ENCODE measurements at regions of chr2 and their contacts with region 1.

Region 1: DNA sequence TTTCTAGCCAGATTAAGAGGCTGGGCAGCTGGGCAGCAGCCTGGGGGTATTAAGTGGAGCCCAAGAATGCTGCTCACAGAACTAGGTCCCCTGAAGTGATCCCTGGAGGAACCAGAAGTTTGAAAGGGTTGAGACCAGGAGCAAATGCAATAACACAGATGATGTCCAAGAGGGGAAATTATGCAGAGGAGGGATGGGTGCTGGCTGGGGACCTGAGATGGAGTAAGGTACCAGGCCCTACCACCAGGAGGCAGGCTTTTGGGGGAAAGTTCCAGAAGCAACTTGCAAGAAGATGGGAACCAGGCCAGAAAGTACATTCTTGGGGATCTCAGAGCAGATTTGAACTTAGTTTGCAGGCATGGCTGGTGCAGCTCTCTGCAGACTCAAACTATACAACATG is 175.1 kb downstream of the NCK2 start:
- DNase-seq: peak; percentile 62
- ATAC-seq: peak; percentile 64
- H3K4me3 ChIP-seq: peak overlapping the region in 1 of 2 experiments; percentile 32; a peak in 1 of 4 replicates
- H3K27ac ChIP-seq: peak overlapping the region; percentile 76
- H3K4me1 ChIP-seq: peaks cover 21 to 39% of the 10 kb centered on the region in 2 experiments
- H3K27me3 ChIP-seq: no peaks in the 10 kb centered on the region
- CTCF ChIP-seq: peak; percentile 44 to 87 (median 85); a peak in 5 of 6 replicates
- POLR2A ChIP-seq: no peak
- RAD21 ChIP-seq: peak; percentile 46

Region 2: DNA sequence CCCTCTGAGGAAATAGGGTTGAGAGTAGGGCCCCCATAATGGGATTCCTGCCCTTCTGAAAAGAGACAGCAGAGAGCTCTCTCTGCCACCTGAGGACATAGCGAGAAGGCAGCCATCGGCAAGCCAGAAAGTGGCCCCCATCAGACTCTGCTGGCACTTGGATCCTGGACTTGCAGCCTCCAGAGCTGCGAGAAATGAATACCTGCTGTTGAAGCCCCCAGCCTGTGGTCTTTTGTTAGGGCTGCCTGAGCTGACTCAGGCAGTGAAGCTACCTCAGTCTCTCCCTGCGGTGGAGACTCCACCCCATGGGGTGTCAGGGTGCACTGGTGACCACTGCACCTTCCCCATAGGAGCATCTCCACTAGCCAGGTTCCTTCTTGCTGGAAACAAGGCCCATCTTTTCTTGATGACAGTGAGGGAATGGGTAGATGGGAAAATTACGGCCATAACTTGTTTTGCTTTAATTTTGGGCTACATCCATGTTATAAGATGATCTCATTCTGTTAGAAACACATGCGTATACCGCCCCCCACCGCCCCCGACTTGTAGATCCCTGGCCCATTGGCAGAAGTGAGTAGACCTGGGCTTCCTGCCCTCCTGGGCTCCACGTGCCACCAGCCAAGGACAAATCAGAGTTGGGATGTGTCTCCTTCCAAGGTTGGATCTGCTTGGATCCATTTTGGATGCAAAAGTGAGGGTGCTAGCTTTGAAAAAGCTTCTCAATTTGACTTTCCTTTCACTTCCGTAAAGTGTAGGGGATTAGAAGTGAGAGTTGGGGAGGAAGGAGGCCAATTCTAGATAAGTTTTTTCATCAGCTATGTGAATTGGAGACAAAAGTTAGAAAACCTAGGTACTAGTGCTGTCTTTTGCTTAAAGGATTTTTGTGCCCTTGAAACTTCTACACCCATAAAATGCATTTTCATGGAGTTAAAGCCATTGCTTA is 132.2 kb before region 1 on chr2:
- CTCF ChIA-PET with region 1: no interaction called
- POLR2A ChIA-PET with region 1: no interaction called
- RAD21 ChIA-PET with region 1: no interaction called
- intact Hi-C with region 1: no loop called
- DNase-seq: no peak
- ATAC-seq: no peak
- H3K4me3 ChIP-seq: no peak overlapping the region
- H3K27ac ChIP-seq: no peak overlapping the region
- H3K4me1 ChIP-seq: peaks cover 9 to 18% of the 10 kb centered on the region in 2 experiments; a peak in 2 of 4 replicates
- H3K27me3 ChIP-seq: no peaks in the 10 kb centered on the region
- CTCF ChIP-seq: no peak
- POLR2A ChIP-seq: no peak
- RAD21 ChIP-seq: no peak

Region 3: GRCh38 chr2:106085181-106085940 is 165.5 kb after region 1 on chr2:
- CTCF ChIA-PET with region 1: interaction called, 3 read pairs
- POLR2A ChIA-PET with region 1: no interaction called
- RAD21 ChIA-PET with region 1: no interaction called
- intact Hi-C with region 1: loop called (anchors 10 kb)
- DNase-seq: no peak
- ATAC-seq: peak; percentile 67
- H3K4me3 ChIP-seq: no peak overlapping the region
- H3K27ac ChIP-seq: no peak overlapping the region
- H3K4me1 ChIP-seq: no peaks in the 10 kb centered on the region
- H3K27me3 ChIP-seq: no peaks in the 10 kb centered on the region; the same call in 1 of the 2 replicates
- CTCF ChIP-seq: peak; percentile 21 to 38 (median 33); a peak in 4 of 6 replicates
- POLR2A ChIP-seq: no peak
- RAD21 ChIP-seq: peak; percentile 53

Measured in HCT116 (cell line).